Activated T-helper 1 cell treated with anti-CD3 and anti-CD28 coated beads, Interleukin-12 subunit alpha, Interleukin-12 subunit beta, Interleukin-2, Interleukin-4 antibody, amounts not matched to agents 30 ng/mL and 10 ng/mL and 1 ng/mL, durations not matched to agents 14 hours and 24 hours and 36 hours (primary cell): ENCODE measurements at regions of chr1 and their contacts with region 1.

Region 1: GRCh38 chr1:25858906-25859789 is at the start of gene AUNIP:
- DNase-seq: peak; percentile 88
- H3K4me3 Mint-ChIP-seq: peak within 1 kb of the TSS; percentile 89
- H3K27ac Mint-ChIP-seq: peak within 1 kb of the TSS; percentile 89
- H3K4me1 Mint-ChIP-seq: peaks cover 35% of the 10 kb centered on the region
- H3K27me3 Mint-ChIP-seq: no peaks in the 10 kb centered on the region
- total RNA-seq, gene AUNIP: 10.2 and 12.3 TPM in 2 replicates

Region 2: DNA sequence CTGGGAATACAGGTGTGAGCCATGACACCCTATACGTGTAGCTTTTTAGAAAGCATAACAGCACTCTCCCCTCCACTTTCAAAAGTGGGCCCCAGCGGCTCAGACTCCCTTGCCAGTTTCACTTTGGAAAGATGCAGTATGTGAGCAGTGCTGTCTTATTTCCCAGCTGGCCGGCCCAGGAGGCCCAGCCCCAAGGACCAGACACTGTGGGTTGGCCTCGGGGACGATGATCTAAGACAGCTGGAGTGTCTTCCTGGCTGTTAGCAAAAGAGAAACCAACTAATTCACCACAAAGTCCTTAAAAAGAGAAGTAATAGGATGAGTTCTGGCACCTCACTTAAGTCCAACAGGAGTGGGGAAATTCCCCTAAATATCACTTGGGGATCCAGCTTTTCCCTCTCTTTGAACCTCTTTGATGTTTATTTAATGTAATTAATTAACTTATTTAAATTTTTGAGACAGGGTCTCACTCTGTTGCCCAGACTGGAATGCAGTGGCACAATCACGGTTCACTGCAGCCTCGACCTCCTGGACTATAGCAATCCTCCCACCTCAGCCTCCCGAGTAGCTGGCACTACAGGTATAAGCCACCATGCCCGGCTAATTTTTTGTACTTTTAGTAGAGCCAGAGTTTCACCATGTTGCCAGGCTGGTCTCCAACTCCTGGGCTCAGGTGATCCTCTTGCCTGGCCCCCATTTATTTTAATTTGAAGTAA is 1131.5 kb before region 1 on chr1:
- intact Hi-C with region 1: no loop called
- DNase-seq: no peak
- H3K4me3 Mint-ChIP-seq: no peak overlapping the region
- H3K27ac Mint-ChIP-seq: no peak overlapping the region
- H3K4me1 Mint-ChIP-seq: peaks cover 10% of the 10 kb centered on the region
- H3K27me3 Mint-ChIP-seq: peaks cover 2% of the 10 kb centered on the region

Region 3: GRCh38 chr1:25253911-25254310 is 605.2 kb before region 1 on chr1:
- intact Hi-C with region 1: no loop called
- DNase-seq: no peak
- H3K4me3 Mint-ChIP-seq: no peak overlapping the region
- H3K27ac Mint-ChIP-seq: no peak overlapping the region
- H3K4me1 Mint-ChIP-seq: no peaks in the 10 kb centered on the region
- H3K27me3 Mint-ChIP-seq: peaks cover 2% of the 10 kb centered on the region

Region 4: DNA sequence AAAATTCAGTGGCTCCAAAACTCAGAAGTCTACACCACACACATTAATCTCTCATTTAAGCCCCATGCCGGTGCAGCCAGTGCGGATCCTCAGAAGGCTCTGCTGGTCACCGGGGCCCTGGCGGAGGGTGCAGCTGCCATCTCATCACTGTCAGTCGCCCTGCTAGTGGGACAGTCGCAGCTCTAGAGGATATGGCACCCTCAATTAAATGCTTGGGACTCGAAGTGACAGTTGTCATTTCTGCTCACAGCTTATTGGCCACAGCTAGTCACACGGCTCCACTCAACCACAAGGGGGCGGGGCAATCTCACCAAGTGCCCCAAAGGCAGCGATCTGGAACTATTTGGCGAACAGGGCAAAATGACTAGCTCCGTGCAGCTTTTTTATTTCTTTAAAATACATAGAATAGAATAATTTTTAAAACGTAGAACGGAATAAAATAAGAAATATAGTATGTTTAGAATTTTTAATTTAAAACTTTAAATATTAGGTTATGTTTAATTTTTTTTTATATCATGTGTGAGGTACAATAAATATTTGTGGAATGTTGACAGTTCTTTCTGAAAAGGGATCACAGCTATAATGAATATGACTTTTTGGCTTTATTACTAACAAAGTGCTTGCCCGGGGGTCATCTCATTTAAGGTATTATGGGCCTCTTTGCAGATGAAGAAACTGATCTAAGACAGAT is 250.5 kb before region 1 on chr1:
- intact Hi-C with region 1: no loop called
- DNase-seq: peak; percentile 76
- H3K4me3 Mint-ChIP-seq: no peak overlapping the region
- H3K27ac Mint-ChIP-seq: no peak overlapping the region
- H3K4me1 Mint-ChIP-seq: no peaks in the 10 kb centered on the region
- H3K27me3 Mint-ChIP-seq: peaks cover 71% of the 10 kb centered on the region

Region 5: GRCh38 chr1:25819576-25820246 is 39.4 kb before region 1 on chr1 and contains the start of gene MTFR1L:
- intact Hi-C with region 1: loop called (anchors 1 kb)
- DNase-seq: peak; percentile 93
- H3K4me3 Mint-ChIP-seq: peak within 1 kb of the TSS; percentile 97
- H3K27ac Mint-ChIP-seq: peak within 1 kb of the TSS; percentile 93
- H3K4me1 Mint-ChIP-seq: peaks cover 35% of the 10 kb centered on the region
- H3K27me3 Mint-ChIP-seq: no peaks in the 10 kb centered on the region
- total RNA-seq, gene MTFR1L: 29.3 and 30.0 TPM in 2 replicates

Region 6: DNA sequence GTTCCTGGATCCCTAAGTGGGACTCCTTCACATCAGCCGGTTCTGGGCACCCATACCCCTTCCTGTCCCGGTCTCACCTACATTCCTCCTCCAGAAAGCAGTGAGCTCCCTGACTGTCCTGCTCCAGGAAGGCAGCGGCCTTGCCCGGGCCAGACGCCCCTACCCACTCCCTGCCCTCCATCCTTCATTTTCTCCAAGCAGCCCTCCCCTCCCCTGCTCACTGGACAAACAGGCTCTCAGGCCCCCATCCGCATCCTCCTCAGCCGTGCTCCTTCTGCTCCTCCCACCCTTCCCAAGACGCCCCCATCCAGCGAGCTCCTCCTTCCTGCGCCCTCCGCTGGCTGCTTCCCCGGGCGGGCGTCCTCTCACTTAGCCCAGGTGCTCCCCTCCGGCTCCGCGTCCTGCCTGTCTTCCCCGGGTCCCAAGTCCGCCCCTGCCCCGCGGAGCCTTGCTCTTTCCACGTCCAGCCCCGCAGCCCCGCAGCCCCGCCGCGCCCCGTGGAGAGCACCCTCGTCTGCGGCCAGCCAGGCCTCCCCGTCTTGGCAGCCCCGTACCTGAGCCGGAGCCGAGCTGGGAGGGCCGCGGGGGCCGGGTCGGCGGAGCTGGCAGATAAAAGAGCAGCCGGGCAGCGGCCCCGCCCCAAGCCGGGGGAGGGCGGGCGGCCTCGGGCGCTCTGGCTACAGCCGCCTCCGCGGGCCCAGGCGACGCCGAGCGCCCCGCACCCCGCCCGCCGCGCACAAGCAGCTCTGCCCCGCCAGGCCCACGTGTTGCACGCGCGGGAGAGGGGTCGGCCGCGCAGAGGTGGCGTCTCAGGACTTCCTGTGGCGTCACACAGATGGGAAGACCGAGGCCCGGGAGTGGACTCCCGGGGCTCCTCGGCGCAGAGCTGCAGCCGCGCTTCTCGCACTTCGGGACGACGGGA is 16.0 kb after region 1 on chr1 and contains the start of gene PAQR7:
- intact Hi-C with region 1: loop called (anchors 1 kb)
- DNase-seq: peak; percentile 50
- H3K4me3 Mint-ChIP-seq: peak within 1 kb of the TSS; percentile 84
- H3K27ac Mint-ChIP-seq: peak within 1 kb of the TSS; percentile 70
- H3K4me1 Mint-ChIP-seq: no peaks in the 10 kb centered on the region
- H3K27me3 Mint-ChIP-seq: peaks cover 12% of the 10 kb centered on the region
- total RNA-seq, gene PAQR7: 5.8 and 6.1 TPM in 2 replicates

Region 7: GRCh38 chr1:25895365-25895993 is 36.3 kb after region 1 on chr1:
- intact Hi-C with region 1: loop called (anchors 1 kb)
- DNase-seq: peak; percentile 85
- H3K4me3 Mint-ChIP-seq: no peak overlapping the region
- H3K27ac Mint-ChIP-seq: peak overlapping the region; percentile 40
- H3K4me1 Mint-ChIP-seq: peaks cover 34% of the 10 kb centered on the region
- H3K27me3 Mint-ChIP-seq: no peaks in the 10 kb centered on the region

Region 8: GRCh38 chr1:25933479-25934365 is 74.6 kb after region 1 on chr1:
- intact Hi-C with region 1: no loop called
- DNase-seq: no peak
- H3K4me3 Mint-ChIP-seq: no peak overlapping the region
- H3K27ac Mint-ChIP-seq: no peak overlapping the region
- H3K4me1 Mint-ChIP-seq: no peaks in the 10 kb centered on the region
- H3K27me3 Mint-ChIP-seq: peaks cover 11% of the 10 kb centered on the region